Dorsolateral prefrontal cortex (tissue), 120 donors: ENCODE measurements at regions of chr1 and their contacts with region 1.

Region 1: GRCh38 chr1:156129706-156130581 is 15.4 kb downstream of the LMNA start:
- DNase-seq: peak; percentile 55 to 83 (median 71)
- H3K4me3 ChIP-seq: no peak overlapping the region
- H3K27ac ChIP-seq: peak overlapping the region; percentile 43 to 98 (median 87)
- H3K27me3 ChIP-seq: no peaks in the 10 kb centered on the region
- CTCF ChIP-seq: peak; percentile 89 to 100 (median 98)

Region 2: DNA sequence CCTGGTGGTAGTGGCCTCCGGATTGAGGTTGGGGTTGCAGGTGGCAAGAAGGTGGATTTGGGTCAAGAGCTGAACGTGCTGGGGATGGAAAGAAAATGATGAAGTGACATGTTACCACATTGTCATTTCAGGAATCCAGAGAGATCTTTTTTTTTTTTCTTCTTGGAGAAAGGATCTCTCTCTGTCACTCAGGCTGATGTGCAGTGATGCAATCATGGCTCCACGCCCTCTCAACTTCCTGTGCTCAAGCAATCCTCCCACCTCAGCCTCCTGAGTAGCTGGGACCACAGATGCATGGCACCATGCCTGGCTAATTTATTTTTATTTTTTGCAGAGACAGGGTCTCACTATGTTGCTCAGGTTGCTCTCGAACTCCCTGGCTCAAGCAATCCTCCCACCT is 353.5 kb before region 1 on chr1:
- intact Hi-C with region 1: no loop called
- DNase-seq: no peak
- H3K4me3 ChIP-seq: no peak overlapping the region
- H3K27ac ChIP-seq: no peak overlapping the region
- H3K27me3 ChIP-seq: no peaks in the 10 kb centered on the region
- CTCF ChIP-seq: no peak

Region 3: DNA sequence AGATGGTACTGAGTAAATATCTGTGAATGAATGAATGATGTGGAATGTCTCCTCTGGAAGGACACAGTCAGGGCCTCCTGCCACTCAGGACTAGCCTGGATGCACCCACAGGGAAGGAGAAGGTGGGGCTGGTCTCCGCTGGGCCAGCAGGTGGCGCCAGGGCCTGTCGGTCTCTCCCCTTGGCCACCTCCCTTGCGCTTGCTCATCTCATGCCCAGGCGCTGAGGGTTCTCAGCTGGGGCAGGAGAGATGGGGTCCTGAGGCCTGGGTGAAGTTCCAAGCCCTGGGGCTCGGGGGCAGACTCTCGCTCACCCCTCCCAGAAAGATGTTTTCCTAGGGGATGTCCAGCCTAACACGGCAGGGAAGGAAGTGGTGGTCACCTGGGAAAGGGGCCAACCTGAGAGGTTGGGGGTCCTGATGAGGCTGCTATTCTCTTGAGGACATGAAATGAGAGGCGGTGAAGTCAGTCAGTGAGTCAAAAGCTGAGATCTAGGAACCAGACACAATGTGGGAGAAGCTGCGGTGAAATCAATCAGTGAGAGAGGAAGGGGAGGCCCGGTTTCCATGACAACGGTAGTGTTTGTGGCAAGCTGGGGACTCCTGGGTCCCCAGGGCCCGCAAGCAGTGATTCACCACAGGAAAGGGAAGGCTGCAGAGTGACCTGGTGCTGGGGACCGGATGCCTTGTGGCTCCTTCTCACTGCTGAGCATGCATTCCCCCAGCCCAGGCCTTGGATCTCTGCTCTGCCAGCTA is 33.1 kb before region 1 on chr1:
- intact Hi-C with region 1: loop called (anchors 1 to 2 kb)
- DNase-seq: peak; percentile 75 to 94 (median 92)
- H3K4me3 ChIP-seq: peak overlapping the region in 5 of 59 donors; percentile 10 to 42 (median 23)
- H3K27ac ChIP-seq: peak overlapping the region in 47 of 59 donors; percentile 0 to 86 (median 57)
- H3K27me3 ChIP-seq: no peaks in the 10 kb centered on the region
- CTCF ChIP-seq: peak; percentile 76 to 99 (median 96)